Natural killer cell (primary cell): ENCODE measurements at regions of chr17 and their contacts with region 1.

Region 1: GRCh38 chr17:46002311-46002972 is 3.4 kb downstream of the STH start:
- DNase-seq: peak; percentile 72 to 85
- ATAC-seq: peak; percentile 92 to 99 (median 98)
- H3K4me3 ChIP-seq: no peak overlapping the region
- H3K4me3 Mint-ChIP-seq: no peak overlapping the region
- H3K27ac ChIP-seq: no peak overlapping the region
- H3K27ac Mint-ChIP-seq: no peak overlapping the region
- H3K4me1 ChIP-seq: peaks cover 7% of the 10 kb centered on the region
- H3K4me1 Mint-ChIP-seq: peaks cover 6 to 16% of the 10 kb centered on the region in 2 donors
- H3K27me3 ChIP-seq: no peaks in the 10 kb centered on the region
- H3K27me3 Mint-ChIP-seq: no peaks in the 10 kb centered on the region
- CTCF ChIP-seq: peak; percentile 89

Region 2: GRCh38 chr17:46044286-46044928 is 42.0 kb after region 1 on chr17:
- intact Hi-C with region 1: loop called (anchors 1 kb)
- DNase-seq: peak; percentile 27 to 78
- ATAC-seq: peak; percentile 55 to 86 (median 78)
- H3K4me3 ChIP-seq: no peak overlapping the region
- H3K4me3 Mint-ChIP-seq: no peak overlapping the region
- H3K27ac ChIP-seq: no peak overlapping the region
- H3K27ac Mint-ChIP-seq: peak overlapping the region; percentile 70 to 76
- H3K4me1 ChIP-seq: no peaks in the 10 kb centered on the region
- H3K4me1 Mint-ChIP-seq: peaks cover 16 to 20% of the 10 kb centered on the region in 2 donors
- H3K27me3 ChIP-seq: no peaks in the 10 kb centered on the region
- H3K27me3 Mint-ChIP-seq: no peaks in the 10 kb centered on the region
- CTCF ChIP-seq: peak; percentile 74

Region 3: GRCh38 chr17:46061435-46061834 is 59.0 kb after region 1 on chr17:
- intact Hi-C with region 1: no loop called
- DNase-seq: no peak
- ATAC-seq: peak in 2 of 3 donors; percentile 42
- H3K4me3 ChIP-seq: no peak overlapping the region
- H3K4me3 Mint-ChIP-seq: no peak overlapping the region
- H3K27ac ChIP-seq: no peak overlapping the region
- H3K27ac Mint-ChIP-seq: peak overlapping the region in 1 of 2 donors; percentile 6
- H3K4me1 ChIP-seq: no peaks in the 10 kb centered on the region
- H3K4me1 Mint-ChIP-seq: peaks cover 30 to 39% of the 10 kb centered on the region in 2 donors
- H3K27me3 ChIP-seq: no peaks in the 10 kb centered on the region
- H3K27me3 Mint-ChIP-seq: no peaks in the 10 kb centered on the region
- CTCF ChIP-seq: peak; percentile 48

Region 4: GRCh38 chr17:46086821-46087220 is 84.4 kb after region 1 on chr17:
- intact Hi-C with region 1: no loop called
- DNase-seq: no peak
- ATAC-seq: no peak
- H3K4me3 ChIP-seq: no peak overlapping the region
- H3K4me3 Mint-ChIP-seq: no peak overlapping the region
- H3K27ac ChIP-seq: no peak overlapping the region
- H3K27ac Mint-ChIP-seq: peak overlapping the region; percentile 66 to 71
- H3K4me1 ChIP-seq: peaks cover 10% of the 10 kb centered on the region
- H3K4me1 Mint-ChIP-seq: peaks cover 76 to 77% of the 10 kb centered on the region in 2 donors
- H3K27me3 ChIP-seq: no peaks in the 10 kb centered on the region
- H3K27me3 Mint-ChIP-seq: no peaks in the 10 kb centered on the region
- CTCF ChIP-seq: no peak

Region 5: GRCh38 chr17:46097497-46097896 is 95.1 kb after region 1 on chr17:
- intact Hi-C with region 1: no loop called
- DNase-seq: no peak
- ATAC-seq: no peak
- H3K4me3 ChIP-seq: no peak overlapping the region
- H3K4me3 Mint-ChIP-seq: peak overlapping the region; percentile 5
- H3K27ac ChIP-seq: no peak overlapping the region
- H3K27ac Mint-ChIP-seq: peak overlapping the region; percentile 47 to 72
- H3K4me1 ChIP-seq: peaks cover 4% of the 10 kb centered on the region
- H3K4me1 Mint-ChIP-seq: peaks cover 55 to 56% of the 10 kb centered on the region in 2 donors
- H3K27me3 ChIP-seq: no peaks in the 10 kb centered on the region
- H3K27me3 Mint-ChIP-seq: no peaks in the 10 kb centered on the region
- CTCF ChIP-seq: no peak